Activated CD8-positive, alpha-beta T cell treated with anti-CD3 and anti-CD28 coated beads for 36 hours (primary cell): ENCODE measurements at regions of chr21 and their contacts with region 1.

Region 1: DNA sequence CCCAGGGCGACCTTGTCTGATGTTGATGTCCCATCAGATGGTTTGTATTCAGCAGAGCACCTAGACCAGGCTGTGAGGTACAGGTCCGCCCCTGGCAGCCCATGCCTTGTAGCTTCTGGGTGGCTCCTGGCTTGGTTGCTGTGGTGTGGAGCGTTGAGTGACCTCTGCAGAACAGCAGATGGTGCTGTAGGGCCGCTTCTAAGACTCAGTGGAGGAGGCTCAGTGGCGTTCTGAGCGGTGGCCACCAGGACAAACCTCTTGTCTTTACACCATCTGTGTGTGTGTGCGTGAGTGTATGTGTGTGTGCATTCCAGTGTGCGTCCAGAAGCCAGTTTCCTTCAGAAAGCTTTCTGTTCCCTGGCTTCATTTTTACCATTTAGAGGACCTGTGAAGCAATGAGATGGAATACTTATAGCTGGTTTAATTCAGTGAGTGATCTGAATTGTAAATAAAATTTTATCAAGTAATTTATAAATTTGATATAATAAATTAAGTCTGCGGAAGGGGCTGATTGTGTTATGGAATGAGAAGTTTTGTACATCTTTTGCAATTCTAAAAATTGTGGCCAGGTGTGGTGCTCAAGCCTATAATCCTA is 66.1 kb downstream of the ADARB1 start:
- DNase-seq: peak; percentile 81
- ATAC-seq: peak; percentile 92
- H3K4me3 Mint-ChIP-seq: no peak overlapping the region
- H3K27ac Mint-ChIP-seq: no peak overlapping the region
- H3K4me1 Mint-ChIP-seq: no peaks in the 10 kb centered on the region
- H3K27me3 Mint-ChIP-seq: no peaks in the 10 kb centered on the region
- CTCF ChIP-seq: peak; percentile 67

Region 2: GRCh38 chr21:44939532-44940115 is 200.8 kb before region 1 on chr21 and contains the start of gene SLX9:
- CTCF ChIA-PET with region 1: interaction called, 158 read pairs
- POLR2A ChIA-PET with region 1: no interaction called
- intact Hi-C with region 1: no loop called
- DNase-seq: peak; percentile 83
- ATAC-seq: peak; percentile 96
- H3K4me3 Mint-ChIP-seq: peak within 1 kb of the TSS; percentile 91
- H3K27ac Mint-ChIP-seq: peak within 1 kb of the TSS; percentile 92
- H3K4me1 Mint-ChIP-seq: peaks cover 43% of the 10 kb centered on the region
- H3K27me3 Mint-ChIP-seq: no peaks in the 10 kb centered on the region
- CTCF ChIP-seq: no peak
- total RNA-seq, gene SLX9: 76.0 to 76.5 TPM

Region 3: GRCh38 chr21:45048968-45049367 is 91.5 kb before region 1 on chr21:
- CTCF ChIA-PET with region 1: interaction called, 13 read pairs
- POLR2A ChIA-PET with region 1: no interaction called
- intact Hi-C with region 1: no loop called
- DNase-seq: no peak
- ATAC-seq: no peak
- H3K4me3 Mint-ChIP-seq: no peak overlapping the region
- H3K27ac Mint-ChIP-seq: no peak overlapping the region
- H3K4me1 Mint-ChIP-seq: no peaks in the 10 kb centered on the region
- H3K27me3 Mint-ChIP-seq: peaks cover 6% of the 10 kb centered on the region
- CTCF ChIP-seq: no peak

Region 4: DNA sequence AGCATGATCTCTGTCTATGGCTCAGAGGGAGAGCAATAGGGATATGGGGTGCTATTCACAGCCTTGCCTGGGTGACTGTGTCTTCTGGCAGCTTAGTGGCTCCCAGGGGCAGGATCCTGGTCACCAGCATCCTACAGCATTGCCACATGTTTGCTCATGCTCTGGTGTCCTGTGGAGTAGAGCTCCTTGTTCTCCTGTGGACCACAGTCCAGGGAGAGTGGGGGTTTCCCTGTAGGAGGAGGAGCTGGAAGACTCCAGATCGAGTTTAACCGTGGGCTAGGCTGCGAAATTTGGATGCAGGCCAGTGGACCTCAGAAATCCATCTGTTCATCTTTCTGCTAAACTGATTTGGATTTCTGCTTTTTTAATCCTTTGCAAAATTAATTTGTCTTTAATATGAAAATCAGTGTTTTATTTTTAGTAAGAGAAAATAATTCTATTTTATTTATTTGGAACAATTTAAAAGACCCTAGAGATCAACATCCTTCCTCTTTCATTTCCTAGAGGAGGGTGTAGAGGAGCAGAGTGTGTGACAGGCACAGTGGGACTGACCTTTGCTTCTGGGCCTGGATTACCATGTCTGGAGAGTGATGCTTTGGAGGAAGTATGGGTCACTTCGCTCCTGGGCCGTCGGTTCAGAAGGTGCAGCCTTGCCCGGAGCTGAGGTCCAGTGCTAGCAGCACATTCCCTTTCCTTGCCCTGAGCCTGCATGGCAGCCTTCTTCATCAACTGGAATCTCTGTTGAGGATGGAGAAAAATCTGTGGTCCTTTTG is 48.7 kb before region 1 on chr21:
- CTCF ChIA-PET with region 1: interaction called, 34 read pairs
- POLR2A ChIA-PET with region 1: no interaction called
- intact Hi-C with region 1: no loop called
- DNase-seq: no peak
- ATAC-seq: no peak
- H3K4me3 Mint-ChIP-seq: no peak overlapping the region
- H3K27ac Mint-ChIP-seq: no peak overlapping the region
- H3K4me1 Mint-ChIP-seq: peaks cover 56% of the 10 kb centered on the region
- H3K27me3 Mint-ChIP-seq: no peaks in the 10 kb centered on the region
- CTCF ChIP-seq: no peak

Region 5: GRCh38 chr21:45114072-45114471 is 26.4 kb before region 1 on chr21:
- CTCF ChIA-PET with region 1: interaction called, 39 read pairs
- POLR2A ChIA-PET with region 1: interaction called, 3 read pairs
- intact Hi-C with region 1: no loop called
- DNase-seq: no peak
- ATAC-seq: no peak
- H3K4me3 Mint-ChIP-seq: no peak overlapping the region
- H3K27ac Mint-ChIP-seq: no peak overlapping the region
- H3K4me1 Mint-ChIP-seq: peaks cover 49% of the 10 kb centered on the region
- H3K27me3 Mint-ChIP-seq: no peaks in the 10 kb centered on the region
- CTCF ChIP-seq: no peak

Region 6: GRCh38 chr21:45152265-45152746 is 11.9 kb after region 1 on chr21:
- CTCF ChIA-PET with region 1: interaction called, 74 read pairs
- POLR2A ChIA-PET with region 1: interaction called, 3 read pairs
- intact Hi-C with region 1: no loop called
- DNase-seq: peak; percentile 90
- ATAC-seq: peak; percentile 98
- H3K4me3 Mint-ChIP-seq: peak overlapping the region; percentile 68
- H3K27ac Mint-ChIP-seq: peak overlapping the region; percentile 84
- H3K4me1 Mint-ChIP-seq: peaks cover 35% of the 10 kb centered on the region
- H3K27me3 Mint-ChIP-seq: no peaks in the 10 kb centered on the region
- CTCF ChIP-seq: peak; percentile 56

Region 7: DNA sequence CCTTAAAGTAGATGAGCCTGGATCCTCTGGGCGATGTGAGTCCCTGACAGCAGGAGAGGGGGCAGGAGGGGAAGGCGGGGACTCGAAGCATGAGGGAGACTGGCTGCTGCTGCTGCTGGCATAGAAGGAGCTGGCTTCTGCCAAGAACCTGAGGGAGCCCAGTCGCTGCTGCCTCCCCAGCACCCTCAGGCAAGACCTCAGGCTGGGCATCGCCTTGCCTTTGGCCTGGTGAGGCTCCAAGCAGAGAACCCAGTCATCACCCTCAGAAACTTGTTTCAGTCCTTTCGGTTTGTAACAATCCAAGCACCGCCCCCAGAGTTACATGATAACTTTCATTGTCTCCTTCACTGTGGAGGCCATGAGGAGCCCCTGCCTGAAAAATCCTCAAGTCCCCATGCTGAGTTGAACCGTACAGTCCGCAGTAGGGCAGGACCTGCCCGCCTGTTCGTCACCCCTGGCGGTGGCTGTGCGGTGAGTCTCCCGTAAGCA is 108.5 kb after region 1 on chr21:
- CTCF ChIA-PET with region 1: no interaction called
- POLR2A ChIA-PET with region 1: no interaction called
- intact Hi-C with region 1: no loop called
- DNase-seq: no peak
- ATAC-seq: no peak
- H3K4me3 Mint-ChIP-seq: no peak overlapping the region
- H3K27ac Mint-ChIP-seq: no peak overlapping the region
- H3K4me1 Mint-ChIP-seq: no peaks in the 10 kb centered on the region
- H3K27me3 Mint-ChIP-seq: no peaks in the 10 kb centered on the region
- CTCF ChIP-seq: no peak

Region 8: DNA sequence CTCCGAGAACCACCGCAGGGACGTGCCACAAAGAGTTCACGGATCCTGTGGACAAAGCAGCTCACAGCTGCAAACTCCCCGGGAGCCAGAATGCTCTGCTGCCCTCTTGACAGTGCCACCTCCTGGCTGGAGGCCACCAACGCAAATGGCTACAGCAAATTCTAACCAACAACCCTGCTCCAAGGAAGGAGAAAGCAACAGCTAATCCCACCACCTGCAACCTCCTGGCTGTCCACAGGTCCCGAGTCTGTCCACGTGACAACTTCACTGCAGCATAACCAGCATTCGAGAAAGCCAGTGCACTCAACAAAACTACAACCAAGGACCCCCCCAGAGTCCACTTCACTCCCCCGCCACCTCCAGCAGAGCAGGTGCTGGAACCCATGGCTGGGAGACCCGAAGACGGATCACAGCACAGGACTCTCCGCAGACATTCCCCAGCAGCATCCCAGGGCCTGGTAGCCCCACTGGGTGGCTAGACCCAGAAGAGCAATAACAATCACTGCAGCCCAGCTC is 129.9 kb after region 1 on chr21:
- CTCF ChIA-PET with region 1: interaction called, 10 read pairs
- POLR2A ChIA-PET with region 1: interaction called, 4 read pairs
- intact Hi-C with region 1: no loop called
- DNase-seq: peak; percentile 24
- ATAC-seq: no peak
- H3K4me3 Mint-ChIP-seq: no peak overlapping the region
- H3K27ac Mint-ChIP-seq: no peak overlapping the region
- H3K4me1 Mint-ChIP-seq: peaks cover 20% of the 10 kb centered on the region
- H3K27me3 Mint-ChIP-seq: no peaks in the 10 kb centered on the region
- CTCF ChIP-seq: no peak